IMR-90 (cell line): ENCODE measurements at regions of chr1 and their contacts with region 1.

Region 1: DNA sequence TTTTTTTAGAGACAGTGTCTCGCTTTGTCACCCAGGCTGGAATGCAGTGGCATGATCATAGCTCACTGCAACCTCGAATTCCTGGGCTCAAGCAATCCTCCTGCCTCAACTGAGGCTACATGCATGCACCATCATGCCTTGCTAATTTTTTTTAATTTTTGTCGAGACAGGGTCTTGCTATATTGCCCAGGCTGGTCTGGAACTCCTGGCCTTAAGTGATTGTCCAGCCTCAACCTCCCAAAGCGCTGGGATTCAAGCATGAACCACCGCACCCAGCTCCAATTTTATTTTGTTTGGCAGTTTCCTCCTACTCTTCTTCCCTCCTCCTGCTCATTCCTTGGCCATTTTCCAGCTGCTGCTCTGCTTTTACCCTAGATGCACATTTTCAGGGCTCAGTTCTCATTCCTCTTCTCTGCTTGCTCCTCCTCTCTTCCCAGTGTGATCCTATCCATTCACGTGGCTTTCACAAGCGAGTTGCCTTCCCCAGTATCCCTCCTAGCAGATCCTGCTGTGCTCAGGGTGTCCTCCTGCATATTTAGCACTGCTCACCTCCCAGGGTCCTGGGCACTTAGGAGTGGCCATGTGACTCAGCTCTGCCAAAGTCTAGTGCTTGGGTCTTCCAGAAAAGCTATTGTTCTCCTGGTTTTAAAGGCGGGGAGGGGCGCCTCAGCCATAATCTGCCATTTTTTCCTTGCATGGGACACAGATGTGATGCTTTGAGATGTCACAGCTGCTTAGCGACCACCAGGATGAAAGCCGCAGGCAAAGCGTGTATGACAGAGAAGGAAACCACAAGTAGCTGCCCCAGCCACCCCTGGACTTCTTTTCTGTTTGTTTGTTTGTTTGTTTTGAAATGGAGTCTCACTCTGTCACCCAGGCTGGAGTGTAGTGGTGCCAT is 33.7 kb downstream of the PSEN2 start:
- DNase-seq: peak; percentile 73
- ATAC-seq: peak; percentile 88
- H3K4me3 ChIP-seq: no peak overlapping the region
- H3K27ac ChIP-seq: no peak overlapping the region
- H3K4me1 ChIP-seq: peaks cover 4% of the 10 kb centered on the region; the same call in 1 of the 2 replicates
- H3K27me3 ChIP-seq: no peaks in the 10 kb centered on the region
- CTCF ChIP-seq: no peak
- POLR2A ChIP-seq: no peak
- RAD21 ChIP-seq: no peak

Region 2: DNA sequence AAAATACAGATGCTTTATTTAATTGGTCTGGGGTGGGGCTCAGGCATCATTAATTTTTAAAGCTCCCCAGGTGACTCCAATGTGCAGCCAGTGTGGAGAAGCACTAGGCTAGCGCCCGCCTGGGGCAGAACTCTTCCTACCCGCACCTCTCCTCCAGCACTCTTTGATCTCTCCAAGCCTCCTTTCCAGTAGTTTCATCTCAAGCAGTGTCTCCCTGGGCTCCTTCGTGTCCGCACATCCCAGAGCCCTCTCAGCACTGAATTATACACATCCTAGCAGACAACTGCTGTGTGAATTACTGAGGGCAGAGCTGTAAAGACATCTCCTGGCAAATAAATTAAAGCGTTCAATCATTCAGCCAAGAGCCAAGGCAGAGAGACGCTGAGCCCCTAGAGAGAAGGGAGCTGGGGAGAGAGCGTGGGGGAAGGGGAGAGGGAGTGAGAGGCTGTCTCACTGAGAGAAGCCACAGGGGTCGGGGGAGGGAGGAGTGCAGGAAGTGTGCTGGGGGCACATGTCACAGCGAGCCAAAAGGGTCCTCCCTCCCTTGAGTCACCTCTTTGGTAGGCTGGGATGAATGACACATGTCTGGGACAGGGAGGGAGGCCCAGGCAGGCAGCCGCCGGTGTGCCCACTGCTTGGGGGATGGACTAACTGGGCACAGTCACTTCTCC is 475.1 kb before region 1 on chr1:
- CTCF ChIA-PET with region 1: no interaction called
- POLR2A ChIA-PET with region 1: no interaction called
- dilution Hi-C with region 1: no loop called
- in situ Hi-C with region 1: no loop called
- intact Hi-C with region 1: no loop called
- DNase-seq: no peak
- ATAC-seq: no peak
- H3K4me3 ChIP-seq: no peak overlapping the region
- H3K27ac ChIP-seq: no peak overlapping the region
- H3K4me1 ChIP-seq: no peaks in the 10 kb centered on the region; the same call in 1 of the 2 replicates
- H3K27me3 ChIP-seq: peaks cover 24% of the 10 kb centered on the region
- CTCF ChIP-seq: no peak
- POLR2A ChIP-seq: no peak
- RAD21 ChIP-seq: no peak

Region 3: GRCh38 chr1:226967665-226968064 is 63.6 kb after region 1 on chr1:
- CTCF ChIA-PET with region 1: no interaction called
- POLR2A ChIA-PET with region 1: no interaction called
- dilution Hi-C with region 1: no loop called
- in situ Hi-C with region 1: no loop called
- intact Hi-C with region 1: loop called (anchors 10 kb)
- DNase-seq: peak; percentile 66
- ATAC-seq: no peak
- H3K4me3 ChIP-seq: no peak overlapping the region
- H3K27ac ChIP-seq: no peak overlapping the region
- H3K4me1 ChIP-seq: no peaks in the 10 kb centered on the region
- H3K27me3 ChIP-seq: no peaks in the 10 kb centered on the region
- CTCF ChIP-seq: no peak
- POLR2A ChIP-seq: no peak
- RAD21 ChIP-seq: no peak

Region 4: DNA sequence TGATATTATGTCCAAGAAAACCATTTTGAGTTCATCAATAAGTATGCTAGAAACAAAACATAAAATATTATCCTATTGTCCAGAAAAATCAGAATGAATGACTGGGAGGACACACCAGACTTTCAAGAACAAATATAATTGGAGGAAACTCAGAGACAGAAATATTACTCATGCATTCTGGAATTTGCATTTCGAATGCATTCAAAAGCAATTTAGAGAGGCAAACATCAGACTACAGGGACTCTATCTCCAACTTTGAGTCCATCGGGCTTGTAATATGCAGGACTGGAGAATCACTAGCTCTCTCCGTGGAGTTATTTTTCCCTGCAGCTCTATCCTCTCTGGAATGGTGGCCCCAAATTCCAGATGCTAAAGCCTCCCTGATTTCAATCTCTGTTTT is 252.5 kb after region 1 on chr1:
- CTCF ChIA-PET with region 1: no interaction called
- POLR2A ChIA-PET with region 1: no interaction called
- dilution Hi-C with region 1: no loop called
- in situ Hi-C with region 1: no loop called
- intact Hi-C with region 1: no loop called
- DNase-seq: no peak
- ATAC-seq: no peak
- H3K4me3 ChIP-seq: no peak overlapping the region
- H3K27ac ChIP-seq: no peak overlapping the region
- H3K4me1 ChIP-seq: no peaks in the 10 kb centered on the region
- H3K27me3 ChIP-seq: no peaks in the 10 kb centered on the region
- CTCF ChIP-seq: no peak
- POLR2A ChIP-seq: no peak
- RAD21 ChIP-seq: no peak

Region 5: GRCh38 chr1:227396539-227397353 is 492.7 kb after region 1 on chr1:
- CTCF ChIA-PET with region 1: no interaction called
- POLR2A ChIA-PET with region 1: no interaction called
- dilution Hi-C with region 1: no loop called
- in situ Hi-C with region 1: no loop called
- intact Hi-C with region 1: no loop called
- DNase-seq: no peak
- ATAC-seq: no peak
- H3K4me3 ChIP-seq: no peak overlapping the region
- H3K27ac ChIP-seq: no peak overlapping the region
- H3K4me1 ChIP-seq: no peaks in the 10 kb centered on the region
- H3K27me3 ChIP-seq: no peaks in the 10 kb centered on the region
- CTCF ChIP-seq: no peak
- POLR2A ChIP-seq: no peak
- RAD21 ChIP-seq: no peak